ENCODE measurements at regions of chr9 and their contacts with region 1.

Region 1: GRCh38 chr9:93302551-93303257 is 118.8 kb downstream of the WNK2 start:
- DNase-seq: no peak
- ATAC-seq: peak; percentile 24 to 54

Region 2: GRCh38 chr9:93159601-93160471 is 142.9 kb before region 1 on chr9:
- intact Hi-C with region 1: loop called (anchors 2 to 5 kb)
- DNase-seq: peak; percentile 84
- ATAC-seq: peak; percentile 94 to 97

Region 3: DNA sequence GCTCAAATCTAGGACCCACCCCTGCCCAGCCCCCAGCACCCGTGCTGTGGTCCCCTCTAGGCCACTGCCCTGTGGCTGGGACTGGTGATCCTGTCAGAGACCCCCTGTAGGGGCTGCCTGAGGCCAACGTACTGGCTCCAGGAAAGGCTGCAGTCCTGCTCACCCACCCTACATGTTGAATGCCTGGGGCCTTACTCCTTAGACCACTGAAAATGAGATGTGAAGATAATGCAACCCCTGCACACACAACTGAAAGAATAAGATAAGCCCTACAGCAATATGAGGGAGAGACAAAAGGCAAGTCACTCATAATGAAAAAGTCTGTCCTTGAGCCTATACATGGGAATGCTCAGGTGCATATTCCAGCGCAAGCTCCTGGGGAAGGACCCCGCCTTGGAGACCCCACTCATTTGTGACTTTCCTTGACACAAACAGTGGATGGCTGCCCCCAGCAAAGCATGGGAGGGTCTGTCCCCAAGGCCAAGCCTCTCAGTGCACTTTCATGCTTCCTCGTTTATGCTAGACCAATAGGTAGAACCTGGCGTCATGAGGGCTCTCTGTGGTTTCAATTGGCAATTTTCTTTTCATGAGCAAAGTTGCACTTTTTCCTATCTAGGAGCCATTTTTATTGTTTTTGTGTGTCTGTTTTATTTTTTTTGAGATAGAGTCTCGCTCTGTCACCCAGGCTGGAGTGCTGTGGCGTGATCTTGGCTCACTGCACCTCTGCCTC is 131.3 kb before region 1 on chr9:
- intact Hi-C with region 1: no loop called
- DNase-seq: no peak
- ATAC-seq: no peak

Region 4: DNA sequence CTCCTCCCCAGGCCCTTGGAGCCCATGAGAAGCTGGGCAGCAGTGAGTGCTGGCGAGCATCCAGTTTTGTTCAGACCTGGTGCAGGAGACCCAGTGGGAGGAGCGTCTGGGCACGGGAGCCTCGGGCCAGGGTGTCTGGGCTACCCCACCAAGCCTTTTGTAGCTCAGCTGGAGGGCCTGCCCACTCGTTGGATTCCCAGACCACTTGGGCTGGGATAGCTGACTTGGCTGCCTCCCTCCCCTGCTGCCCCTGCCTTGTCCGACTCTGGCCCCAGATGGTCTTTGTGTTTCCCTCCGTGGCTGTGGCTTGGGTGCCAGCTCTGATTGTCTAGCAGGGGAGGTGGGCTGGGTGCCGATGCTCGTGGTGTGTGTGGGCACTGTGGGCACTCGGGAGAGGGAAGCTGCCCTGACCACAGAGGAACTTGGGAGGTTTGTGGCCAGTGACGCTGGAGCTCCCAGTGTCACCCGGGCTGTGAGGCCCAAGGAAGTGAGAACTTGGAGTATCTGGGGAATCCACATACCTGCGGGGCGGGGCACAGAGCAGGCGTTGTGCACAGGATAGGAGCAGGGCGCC is 71.5 kb before region 1 on chr9:
- intact Hi-C with region 1: no loop called
- DNase-seq: peak; percentile 69
- ATAC-seq: peak; percentile 44 to 81

Region 5: GRCh38 chr9:93268551-93269314 is 34.0 kb before region 1 on chr9:
- intact Hi-C with region 1: loop called in 1 of 2 experiments (anchors 5 kb)
- DNase-seq: no peak
- ATAC-seq: no peak

Region 6: GRCh38 chr9:93387791-93388190 is 85.1 kb after region 1 on chr9:
- intact Hi-C with region 1: no loop called
- DNase-seq: no peak
- ATAC-seq: no peak

Region 7: GRCh38 chr9:93670208-93671019 is 367.7 kb after region 1 on chr9:
- intact Hi-C with region 1: no loop called
- DNase-seq: no peak
- ATAC-seq: peak in 1 of 2 donors; percentile 8

Measured in left cardiac atrium (tissue), 4 donors.